ENCODE measurements at regions of chr16 and their contacts with region 1.

Region 1: DNA sequence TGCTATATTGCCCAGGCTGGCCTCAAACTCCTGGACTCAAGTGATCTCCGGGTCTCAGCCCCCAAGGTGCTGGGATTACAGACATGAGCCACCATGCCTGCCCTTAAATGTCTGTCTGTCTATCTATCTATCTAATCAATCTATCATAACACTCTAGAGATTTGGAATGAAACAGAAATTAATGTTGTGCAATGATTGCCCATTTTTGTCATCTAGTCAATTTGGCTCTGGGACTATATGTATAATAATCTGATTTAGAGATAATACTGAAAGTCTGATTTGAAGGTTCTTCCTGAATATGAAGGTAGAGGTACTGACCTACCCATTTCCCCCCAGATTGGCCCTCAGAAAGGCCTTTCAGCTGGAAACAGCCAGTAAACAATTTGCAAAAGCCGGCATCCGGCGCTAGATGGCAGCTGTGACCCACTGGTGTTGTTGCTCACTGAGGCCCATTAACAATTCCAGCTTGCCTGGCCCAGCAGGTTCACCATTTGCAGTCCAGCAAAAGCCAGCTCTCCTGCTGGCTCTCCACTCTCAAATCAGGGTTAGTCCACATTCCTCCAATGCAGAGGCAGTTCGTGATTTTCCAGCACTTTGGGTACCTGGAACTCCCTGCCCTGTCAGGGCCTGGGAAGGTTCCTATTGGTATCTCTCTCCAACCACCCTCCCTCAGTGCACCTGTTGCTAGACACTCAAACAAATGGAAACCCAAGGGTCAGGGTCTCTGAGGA is 22.9 kb upstream of the C16orf87 start:
- DNase-seq: peak; percentile 80
- ATAC-seq: no peak
- H3K4me3 Mint-ChIP-seq: no peak overlapping the region
- H3K27ac Mint-ChIP-seq: no peak overlapping the region
- H3K4me1 Mint-ChIP-seq: no peaks in the 10 kb centered on the region
- H3K27me3 Mint-ChIP-seq: no peaks in the 10 kb centered on the region

Region 2: DNA sequence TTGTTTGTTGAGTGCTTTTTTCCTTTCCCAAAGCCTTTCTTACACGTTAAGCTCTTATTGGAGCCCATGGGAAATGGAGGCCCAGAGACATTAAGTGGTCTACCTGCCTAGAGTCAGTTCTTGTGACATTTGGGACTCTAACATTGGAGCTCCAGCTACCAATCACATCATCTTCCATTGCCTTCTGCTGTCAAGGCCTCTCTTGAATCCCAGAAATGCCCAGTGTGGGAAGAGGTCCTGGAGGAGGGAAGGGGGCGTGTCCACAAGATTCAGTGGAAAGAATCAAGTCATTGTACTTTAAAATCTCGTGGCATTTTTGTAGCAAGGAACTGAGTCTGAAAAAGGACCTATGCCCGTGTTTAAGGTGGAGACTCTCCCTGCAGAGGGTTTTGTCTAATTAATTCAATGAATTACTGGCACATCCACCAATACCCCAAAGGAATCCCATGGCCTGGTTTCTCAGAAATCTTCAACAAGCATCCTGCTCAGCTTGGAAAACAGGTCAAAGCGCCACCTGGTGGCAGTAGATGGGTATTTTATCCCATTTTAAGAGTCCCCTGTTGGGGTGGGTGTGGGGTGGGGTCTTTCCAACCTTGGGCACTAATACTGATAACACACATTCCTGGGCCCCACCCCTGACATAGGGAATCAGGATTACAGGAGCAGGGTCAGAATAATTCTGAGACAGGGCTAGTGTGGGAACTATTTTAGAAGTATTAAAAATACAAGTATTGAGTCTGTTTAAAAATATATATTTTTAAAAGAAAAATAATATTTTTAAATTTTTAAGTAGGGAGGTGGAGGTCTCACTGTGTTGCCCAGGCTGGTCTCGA is 54.9 kb after region 1 on chr16:
- CTCF ChIA-PET with region 1: interaction called, 38 read pairs
- POLR2A ChIA-PET with region 1: no interaction called
- intact Hi-C with region 1: loop called (anchors 1 kb)
- DNase-seq: peak; percentile 77
- ATAC-seq: peak; percentile 36
- H3K4me3 Mint-ChIP-seq: no peak overlapping the region
- H3K27ac Mint-ChIP-seq: no peak overlapping the region
- H3K4me1 Mint-ChIP-seq: peaks cover 5% of the 10 kb centered on the region
- H3K27me3 Mint-ChIP-seq: no peaks in the 10 kb centered on the region

Region 3: GRCh38 chr16:46914556-46915201 is 60.8 kb after region 1 on chr16:
- CTCF ChIA-PET with region 1: interaction called, 38 read pairs
- POLR2A ChIA-PET with region 1: no interaction called
- intact Hi-C with region 1: loop called (anchors 1 kb)
- DNase-seq: no peak
- ATAC-seq: no peak
- H3K4me3 Mint-ChIP-seq: no peak overlapping the region
- H3K27ac Mint-ChIP-seq: no peak overlapping the region
- H3K4me1 Mint-ChIP-seq: peaks cover 5% of the 10 kb centered on the region
- H3K27me3 Mint-ChIP-seq: no peaks in the 10 kb centered on the region

Region 4: GRCh38 chr16:46929378-46930332 is 75.8 kb after region 1 on chr16:
- CTCF ChIA-PET with region 1: interaction called, 20 read pairs
- POLR2A ChIA-PET with region 1: no interaction called
- intact Hi-C with region 1: loop called (anchors 1 kb)
- DNase-seq: peak; percentile 82
- ATAC-seq: peak; percentile 87
- H3K4me3 Mint-ChIP-seq: no peak overlapping the region
- H3K27ac Mint-ChIP-seq: no peak overlapping the region
- H3K4me1 Mint-ChIP-seq: peaks cover 4% of the 10 kb centered on the region
- H3K27me3 Mint-ChIP-seq: no peaks in the 10 kb centered on the region

Region 5: GRCh38 chr16:47037746-47038458 is 184.0 kb after region 1 on chr16:
- CTCF ChIA-PET with region 1: no interaction called
- POLR2A ChIA-PET with region 1: no interaction called
- intact Hi-C with region 1: loop called in 1 of 2 experiments (anchors 5 kb)
- DNase-seq: peak; percentile 94
- ATAC-seq: peak; percentile 98
- H3K4me3 Mint-ChIP-seq: peak overlapping the region; percentile 65
- H3K27ac Mint-ChIP-seq: no peak overlapping the region
- H3K4me1 Mint-ChIP-seq: peaks cover 2% of the 10 kb centered on the region
- H3K27me3 Mint-ChIP-seq: peaks cover 8% of the 10 kb centered on the region

Region 6: GRCh38 chr16:47278306-47278970 is 424.6 kb after region 1 on chr16:
- CTCF ChIA-PET with region 1: no interaction called
- POLR2A ChIA-PET with region 1: no interaction called
- intact Hi-C with region 1: no loop called
- DNase-seq: no peak
- ATAC-seq: no peak
- H3K4me3 Mint-ChIP-seq: no peak overlapping the region
- H3K27ac Mint-ChIP-seq: no peak overlapping the region
- H3K4me1 Mint-ChIP-seq: no peaks in the 10 kb centered on the region
- H3K27me3 Mint-ChIP-seq: no peaks in the 10 kb centered on the region

Measured in activated CD4-positive, alpha-beta T cell treated with anti-CD3 and anti-CD28 coated beads for 36 hours (primary cell).